ENCODE measurements at regions of chr1 and their contacts with region 1.

Region 1: DNA sequence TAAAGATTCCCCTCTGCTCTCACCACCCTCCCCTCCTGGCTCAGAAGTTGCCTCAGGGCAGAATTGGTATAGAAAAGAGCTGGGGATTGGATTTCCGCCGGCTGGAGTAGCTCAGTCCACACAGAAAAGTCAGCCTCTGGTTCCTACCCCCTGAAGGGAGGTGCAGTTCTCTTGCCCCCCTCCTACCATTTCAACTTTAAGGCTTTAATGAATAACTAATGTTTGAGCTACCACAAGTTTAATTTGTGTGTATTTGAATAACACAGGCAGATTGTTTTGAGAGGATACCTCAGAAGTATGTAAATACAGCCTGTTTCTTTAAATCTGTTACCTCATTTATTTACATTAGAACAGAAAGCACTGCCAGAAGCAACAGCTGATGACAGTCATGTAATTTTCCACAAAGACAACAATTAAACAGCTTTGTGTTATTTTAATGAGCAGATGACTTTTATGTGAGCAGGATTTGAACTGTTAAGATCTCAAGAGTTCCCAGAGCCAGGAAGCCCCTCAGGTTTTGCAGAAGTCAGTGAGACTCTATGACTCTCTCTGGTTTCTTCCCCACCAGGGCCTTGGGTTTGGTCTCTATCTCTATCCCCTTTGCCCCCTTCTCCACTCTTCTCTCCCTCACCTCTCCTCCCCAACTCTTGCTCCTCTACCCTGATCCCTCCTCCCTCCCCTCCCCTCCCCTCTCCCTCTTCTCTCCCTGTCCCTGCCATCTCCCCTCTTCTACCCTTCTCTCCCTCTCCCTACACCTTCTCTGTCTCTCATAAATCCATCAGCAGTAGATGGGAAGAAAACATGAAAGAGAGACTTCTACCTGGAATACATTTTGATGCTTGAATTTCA is 26.3 kb downstream of the DUSP10 start:
- DNase-seq: no peak
- ATAC-seq: no peak

Region 2: DNA sequence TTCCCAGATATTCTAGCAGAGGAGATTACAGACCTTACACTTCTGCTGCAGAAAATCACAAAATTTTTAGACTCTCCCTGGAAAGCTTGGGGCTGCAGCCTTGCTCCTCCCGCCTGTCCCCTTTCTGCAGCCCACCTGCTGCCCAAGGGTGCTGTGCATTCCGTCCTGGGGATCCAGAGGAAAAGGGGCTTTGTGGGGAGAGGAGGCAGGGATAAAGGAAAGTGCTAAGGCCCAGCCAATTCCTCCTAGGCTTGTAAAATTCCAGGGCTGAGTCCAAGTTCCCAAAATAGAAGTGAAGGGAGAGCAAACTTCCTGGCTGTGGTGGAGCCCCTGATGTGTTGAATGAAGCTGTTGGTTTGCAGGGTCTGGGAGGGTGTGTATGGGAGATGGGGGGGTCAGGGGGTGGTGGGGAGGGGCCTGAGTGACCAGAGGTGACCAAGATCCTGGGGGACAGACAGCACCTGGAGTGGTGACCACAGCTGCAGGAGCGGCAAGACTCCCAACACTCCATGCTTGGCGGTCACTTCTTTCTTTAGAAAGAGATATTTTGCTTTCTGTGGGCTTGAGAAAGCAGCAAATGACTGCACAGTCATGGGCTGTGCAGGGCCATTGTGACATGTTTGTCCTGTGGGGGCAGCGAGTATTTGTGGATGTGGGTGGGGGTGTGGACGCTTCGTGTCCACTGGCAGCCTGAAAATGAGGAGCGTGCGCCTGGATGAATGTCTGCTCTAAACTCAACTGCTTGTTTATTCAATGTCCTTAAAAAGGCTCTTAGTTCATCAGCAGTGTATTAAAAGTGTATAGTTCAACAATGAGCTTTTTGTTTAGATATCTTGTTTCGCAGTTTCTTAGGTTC is 1359.1 kb after region 1 on chr1:
- intact Hi-C with region 1: loop called (anchors 5 kb)
- DNase-seq: no peak
- ATAC-seq: peak; percentile 67

Measured in left ventricle myocardium superior (tissue), 1 donor.